ENCODE measurements at regions of chr5 and their contacts with region 1.

Region 1: DNA sequence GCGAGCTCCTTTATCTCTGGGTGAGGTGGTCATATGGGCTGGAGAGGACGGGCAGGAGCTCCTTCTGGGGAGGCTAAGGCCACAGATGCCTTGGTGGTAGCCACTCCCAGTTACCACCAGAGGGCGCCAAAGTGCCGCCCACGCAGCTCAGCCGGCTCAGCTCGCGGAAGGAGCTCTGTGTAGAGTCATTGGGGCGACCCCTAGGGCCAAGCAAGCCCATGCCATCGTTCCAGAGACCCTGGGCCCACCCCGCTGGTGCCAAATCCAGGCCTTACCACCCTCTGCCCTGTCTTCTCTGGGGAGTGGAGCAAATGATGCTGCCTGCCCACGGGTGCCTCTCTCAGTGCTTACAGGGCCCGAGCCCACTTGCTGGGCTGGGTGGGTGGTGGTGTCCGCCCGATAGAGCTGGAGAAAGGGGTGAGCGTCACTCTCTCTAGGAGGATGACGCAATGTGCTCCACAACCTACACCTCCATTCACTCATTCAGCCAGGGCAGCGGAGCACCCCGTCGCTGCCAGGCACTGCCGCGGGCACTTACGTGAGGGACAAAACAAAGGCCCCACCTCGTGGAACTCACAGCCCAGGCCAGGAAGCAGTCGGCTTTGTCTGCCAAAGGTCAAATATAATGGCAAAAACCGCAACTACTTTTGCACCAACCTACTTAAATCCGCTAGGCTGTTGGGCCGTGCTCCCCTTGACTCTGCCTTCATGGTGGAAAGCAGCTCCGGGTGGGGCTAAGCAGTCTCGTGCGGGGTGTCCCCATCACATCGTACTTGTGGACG is 13.8 kb downstream of the TSPAN17 start:
- DNase-seq: peak; percentile 69
- H3K4me3 ChIP-seq: no peak overlapping the region
- H3K27ac ChIP-seq: no peak overlapping the region
- H3K4me1 ChIP-seq: no peaks in the 10 kb centered on the region
- H3K27me3 ChIP-seq: peaks cover 0 to 10% of the 10 kb centered on the region in 2 experiments
- CTCF ChIP-seq: peak; percentile 91 to 100
- POLR2A ChIP-seq: no peak

Region 2: GRCh38 chr5:176188506-176189193 is 472.4 kb before region 1 on chr5:
- CTCF ChIA-PET with region 1: no interaction called
- POLR2A ChIA-PET with region 1: no interaction called
- dilution Hi-C with region 1: no loop called
- intact Hi-C with region 1: no loop called
- DNase-seq: no peak
- H3K4me3 ChIP-seq: no peak overlapping the region
- H3K27ac ChIP-seq: no peak overlapping the region
- H3K4me1 ChIP-seq: no peaks in the 10 kb centered on the region
- H3K27me3 ChIP-seq: no peaks in the 10 kb centered on the region
- CTCF ChIP-seq: no peak
- POLR2A ChIP-seq: no peak

Region 3: DNA sequence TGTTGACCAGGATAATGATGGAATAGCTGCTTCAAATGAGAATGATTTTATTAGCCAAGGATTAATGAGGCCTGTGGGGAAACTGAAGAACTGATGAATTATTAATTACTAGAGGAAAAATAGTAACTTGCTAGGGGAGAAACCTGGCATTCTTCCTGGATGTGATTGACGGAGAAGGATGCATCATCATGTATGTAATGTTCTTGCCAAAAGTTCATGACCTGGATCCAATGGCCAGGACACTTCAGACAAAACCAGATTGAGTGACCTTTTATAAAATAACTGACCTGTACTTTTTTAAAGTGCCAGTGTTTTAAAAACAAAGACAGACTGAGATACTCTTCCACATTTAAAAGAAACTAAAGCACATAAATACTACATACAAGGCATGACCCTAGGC is 323.1 kb before region 1 on chr5:
- CTCF ChIA-PET with region 1: no interaction called
- POLR2A ChIA-PET with region 1: no interaction called
- dilution Hi-C with region 1: no loop called
- intact Hi-C with region 1: no loop called
- DNase-seq: no peak
- H3K4me3 ChIP-seq: no peak overlapping the region
- H3K27ac ChIP-seq: no peak overlapping the region
- H3K4me1 ChIP-seq: no peaks in the 10 kb centered on the region
- H3K27me3 ChIP-seq: no peaks in the 10 kb centered on the region
- CTCF ChIP-seq: no peak
- POLR2A ChIP-seq: no peak

Region 4: DNA sequence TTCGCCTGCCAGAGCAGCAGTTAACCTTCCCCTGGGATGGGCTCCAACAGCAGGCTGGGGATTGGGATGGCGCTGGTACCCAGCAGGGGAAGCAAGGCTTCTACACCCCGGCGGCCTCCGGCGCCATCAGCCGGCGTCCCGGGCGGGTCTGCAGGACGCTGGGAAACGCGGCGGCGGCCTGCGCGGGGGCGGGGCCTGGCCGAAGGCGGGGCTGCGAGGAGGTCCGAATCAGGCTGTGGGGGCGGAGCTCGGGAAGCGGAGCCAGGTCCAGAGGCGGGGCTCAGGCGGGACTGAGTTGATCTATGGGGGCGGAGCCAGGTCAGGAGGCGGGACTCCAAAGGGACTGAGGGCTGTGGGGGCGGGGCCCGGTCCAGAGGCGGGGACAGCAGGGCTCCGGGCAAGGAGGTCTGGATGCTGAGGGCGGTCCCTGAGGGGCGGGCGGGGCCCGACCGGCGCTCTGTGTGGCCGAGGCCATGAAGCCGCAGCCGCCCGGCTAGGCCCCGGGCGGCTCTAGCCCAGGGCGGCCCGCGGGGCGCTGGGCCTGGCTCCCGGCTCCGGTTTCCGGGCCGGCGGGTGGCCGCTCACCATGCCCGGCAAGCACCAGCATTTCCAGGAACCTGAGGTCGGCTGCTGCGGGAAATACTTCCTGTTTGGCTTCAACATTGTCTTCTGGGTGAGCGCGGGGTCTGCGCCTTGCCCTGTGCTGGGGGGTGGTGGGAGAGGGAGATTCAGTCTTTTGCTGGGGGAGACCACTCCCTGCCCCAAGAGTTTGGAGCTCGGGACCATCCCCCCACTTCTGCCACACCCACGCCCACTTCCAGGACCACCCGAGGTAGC is 13.8 kb before region 1 on chr5 and contains the start of gene TSPAN17:
- CTCF ChIA-PET with region 1: interaction called, 20 read pairs
- POLR2A ChIA-PET with region 1: interaction called, 3 read pairs
- dilution Hi-C with region 1: no loop called
- intact Hi-C with region 1: no loop called
- DNase-seq: peak; percentile 99
- H3K4me3 ChIP-seq: peak within 1 kb of the TSS; percentile 29 to 51 (median 50)
- H3K27ac ChIP-seq: peak within 1 kb of the TSS; percentile 0
- H3K4me1 ChIP-seq: peaks cover 12% of the 10 kb centered on the region
- H3K27me3 ChIP-seq: no peaks in the 10 kb centered on the region
- CTCF ChIP-seq: peak in 1 of 2 donors; percentile 10
- POLR2A ChIP-seq: peak; percentile 98
- total RNA-seq, gene TSPAN17: 55.9 and 57.0 TPM in 2 replicates

Region 5: GRCh38 chr5:176714067-176714466 is 53.0 kb after region 1 on chr5:
- CTCF ChIA-PET with region 1: interaction called, 10 read pairs
- POLR2A ChIA-PET with region 1: no interaction called
- dilution Hi-C with region 1: no loop called
- intact Hi-C with region 1: no loop called
- DNase-seq: no peak
- H3K4me3 ChIP-seq: no peak overlapping the region
- H3K27ac ChIP-seq: no peak overlapping the region
- H3K4me1 ChIP-seq: no peaks in the 10 kb centered on the region
- H3K27me3 ChIP-seq: peaks cover 4 to 22% of the 10 kb centered on the region in 2 experiments
- CTCF ChIP-seq: no peak
- POLR2A ChIP-seq: no peak

Region 6: GRCh38 chr5:176817841-176818377 is 156.9 kb after region 1 on chr5:
- CTCF ChIA-PET with region 1: interaction called, 40 read pairs
- POLR2A ChIA-PET with region 1: no interaction called
- dilution Hi-C with region 1: no loop called
- intact Hi-C with region 1: loop called (anchors 1 kb)
- DNase-seq: peak; percentile 16
- H3K4me3 ChIP-seq: peak overlapping the region in 2 of 3 experiments; percentile 2 to 8
- H3K27ac ChIP-seq: no peak overlapping the region
- H3K4me1 ChIP-seq: no peaks in the 10 kb centered on the region
- H3K27me3 ChIP-seq: peaks cover 21 to 24% of the 10 kb centered on the region in 2 experiments
- CTCF ChIP-seq: peak; percentile 31 to 58
- POLR2A ChIP-seq: no peak

Region 7: DNA sequence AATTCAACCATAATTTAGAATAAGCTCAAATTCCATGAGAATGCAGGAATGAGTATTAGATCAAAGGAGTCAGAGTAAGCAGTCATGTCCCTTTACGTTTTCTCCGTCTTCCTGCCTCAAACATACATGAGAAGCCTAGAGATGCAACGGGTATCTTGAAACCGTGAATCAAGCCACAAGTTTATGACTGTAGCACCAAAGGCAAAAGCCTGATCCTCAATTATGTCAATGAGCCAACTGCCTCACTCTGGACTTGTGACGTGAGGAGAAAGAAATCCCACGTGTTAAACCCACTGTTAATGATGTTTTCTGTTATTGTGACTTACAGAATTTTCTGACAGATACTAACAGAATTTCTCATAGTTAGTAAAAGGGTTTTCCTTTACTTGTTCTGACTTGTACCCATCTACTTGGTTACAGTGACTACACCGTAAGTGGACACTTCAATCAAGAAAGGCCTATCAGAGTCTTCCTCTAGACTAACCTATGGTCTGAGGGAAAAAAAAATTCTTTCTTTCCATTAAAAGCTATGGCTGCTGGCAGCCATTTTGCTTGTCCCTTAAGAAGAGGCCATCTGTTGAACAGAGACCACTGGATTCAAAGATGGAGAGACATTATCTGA is 273.4 kb after region 1 on chr5:
- CTCF ChIA-PET with region 1: interaction called, 13 read pairs
- POLR2A ChIA-PET with region 1: no interaction called
- dilution Hi-C with region 1: no loop called
- intact Hi-C with region 1: no loop called
- DNase-seq: no peak
- H3K4me3 ChIP-seq: no peak overlapping the region
- H3K27ac ChIP-seq: no peak overlapping the region
- H3K4me1 ChIP-seq: no peaks in the 10 kb centered on the region
- H3K27me3 ChIP-seq: no peaks in the 10 kb centered on the region
- CTCF ChIP-seq: no peak
- POLR2A ChIP-seq: no peak

Region 8: GRCh38 chr5:177071666-177072385 is 410.8 kb after region 1 on chr5:
- CTCF ChIA-PET with region 1: interaction called, 24 read pairs
- POLR2A ChIA-PET with region 1: no interaction called
- dilution Hi-C with region 1: no loop called
- intact Hi-C with region 1: no loop called
- DNase-seq: peak; percentile 86
- H3K4me3 ChIP-seq: no peak overlapping the region
- H3K27ac ChIP-seq: no peak overlapping the region
- H3K4me1 ChIP-seq: no peaks in the 10 kb centered on the region
- H3K27me3 ChIP-seq: no peaks in the 10 kb centered on the region
- CTCF ChIP-seq: peak; percentile 77 to 80
- POLR2A ChIP-seq: no peak

Measured in endothelial cell of umbilical vein (primary cell).